MCF 10A (cell line): ENCODE measurements at regions of chr1 and their contacts with region 1.

Region 1: DNA sequence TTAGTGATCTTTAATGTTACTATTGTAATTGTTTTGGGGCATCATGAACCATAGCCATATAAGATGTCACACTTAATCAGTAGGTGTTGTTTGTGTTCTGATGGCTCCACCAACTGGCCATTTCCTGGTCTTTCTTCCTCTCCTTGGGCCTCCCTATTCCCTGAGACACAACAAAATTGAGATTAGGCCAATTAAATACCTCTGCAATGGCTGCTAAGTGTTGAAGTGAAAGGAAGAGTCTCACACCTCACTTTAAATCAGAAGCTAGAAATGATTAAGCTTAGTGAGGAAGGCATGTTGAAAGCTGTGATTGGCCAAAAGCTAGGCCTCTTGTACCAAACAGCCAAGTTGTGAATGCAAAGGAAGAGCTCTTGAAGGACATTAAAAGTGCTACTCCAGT is 30.7 kb downstream of the PPP2R5A start:
- DNase-seq: peak; percentile 72
- H3K4me3 Mint-ChIP-seq: no peak overlapping the region
- H3K27ac Mint-ChIP-seq: peak overlapping the region; percentile 60
- H3K4me1 Mint-ChIP-seq: peaks cover 14% of the 10 kb centered on the region
- H3K27me3 Mint-ChIP-seq: no peaks in the 10 kb centered on the region
- CTCF ChIP-seq: peak; percentile 48

Region 2: GRCh38 chr1:212302745-212303383 is 13.0 kb before region 1 on chr1:
- CTCF ChIA-PET with region 1: interaction called, 3 read pairs
- POLR2A ChIA-PET with region 1: interaction called, 13 read pairs
- intact Hi-C with region 1: no loop called
- DNase-seq: no peak
- H3K4me3 Mint-ChIP-seq: no peak overlapping the region
- H3K27ac Mint-ChIP-seq: no peak overlapping the region
- H3K4me1 Mint-ChIP-seq: peaks cover 7% of the 10 kb centered on the region
- H3K27me3 Mint-ChIP-seq: no peaks in the 10 kb centered on the region
- CTCF ChIP-seq: no peak

Region 3: GRCh38 chr1:212346601-212347000 is 30.7 kb after region 1 on chr1:
- CTCF ChIA-PET with region 1: interaction called, 11 read pairs
- POLR2A ChIA-PET with region 1: interaction called, 3 read pairs
- intact Hi-C with region 1: no loop called
- DNase-seq: no peak
- H3K4me3 Mint-ChIP-seq: no peak overlapping the region
- H3K27ac Mint-ChIP-seq: no peak overlapping the region
- H3K4me1 Mint-ChIP-seq: no peaks in the 10 kb centered on the region
- H3K27me3 Mint-ChIP-seq: no peaks in the 10 kb centered on the region
- CTCF ChIP-seq: no peak